CD4-positive, alpha-beta memory T cell (primary cell): ENCODE measurements at regions of chr7 and their contacts with region 1.

Region 1: DNA sequence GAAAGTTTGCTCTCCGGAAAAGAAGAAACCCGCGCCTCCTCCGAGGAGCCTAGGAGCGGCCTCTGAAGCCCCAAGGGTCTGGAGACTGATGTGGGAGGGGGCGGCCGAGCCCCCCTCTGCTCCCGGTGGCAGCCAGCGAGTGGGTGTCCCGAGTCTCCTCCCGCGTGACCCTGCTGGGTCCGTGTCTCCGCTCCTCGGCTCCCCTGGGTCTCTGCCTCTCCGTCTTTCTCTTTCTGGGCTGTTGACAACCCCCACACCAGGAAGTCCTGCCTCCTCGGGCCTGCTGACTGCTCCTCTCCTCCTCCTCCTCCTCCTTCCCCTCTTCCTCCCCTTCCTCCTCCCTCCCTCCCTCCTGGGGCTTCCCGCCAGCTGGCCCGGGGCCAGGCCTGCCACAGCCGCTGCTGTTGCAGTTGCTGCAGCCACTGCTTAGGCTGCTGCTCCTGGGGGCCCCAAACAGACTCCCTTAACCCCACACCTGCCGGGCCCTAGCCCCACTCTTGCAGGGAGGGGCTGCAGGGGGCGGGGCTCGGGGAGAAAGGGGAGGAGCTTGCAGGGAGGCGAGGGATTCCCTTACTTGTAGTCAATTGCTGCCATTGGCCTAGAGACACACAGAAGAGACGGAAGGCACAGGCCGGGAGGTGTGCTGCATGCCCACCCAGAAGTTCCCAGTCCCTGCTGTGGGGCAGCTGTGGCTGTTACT is at the start of gene TSC22D4:
- DNase-seq: peak; percentile 93 to 97 (median 95)
- H3K4me3 ChIP-seq: peak within 1 kb of the TSS; percentile 81 to 95
- H3K4me3 Mint-ChIP-seq: peak within 1 kb of the TSS; percentile 82 to 99 (median 98)
- H3K27ac ChIP-seq: peak within 1 kb of the TSS; percentile 75
- H3K27ac Mint-ChIP-seq: peak within 1 kb of the TSS; percentile 75 to 99 (median 94)
- H3K4me1 ChIP-seq: peaks cover 58% of the 10 kb centered on the region
- H3K4me1 Mint-ChIP-seq: peaks cover 28 to 57% (median 38%) of the 10 kb centered on the region in 4 donors
- H3K27me3 ChIP-seq: no peaks in the 10 kb centered on the region
- H3K27me3 Mint-ChIP-seq: no peaks in the 10 kb centered on the region
- total RNA-seq, gene TSC22D4: 144 to 154 TPM

Region 2: DNA sequence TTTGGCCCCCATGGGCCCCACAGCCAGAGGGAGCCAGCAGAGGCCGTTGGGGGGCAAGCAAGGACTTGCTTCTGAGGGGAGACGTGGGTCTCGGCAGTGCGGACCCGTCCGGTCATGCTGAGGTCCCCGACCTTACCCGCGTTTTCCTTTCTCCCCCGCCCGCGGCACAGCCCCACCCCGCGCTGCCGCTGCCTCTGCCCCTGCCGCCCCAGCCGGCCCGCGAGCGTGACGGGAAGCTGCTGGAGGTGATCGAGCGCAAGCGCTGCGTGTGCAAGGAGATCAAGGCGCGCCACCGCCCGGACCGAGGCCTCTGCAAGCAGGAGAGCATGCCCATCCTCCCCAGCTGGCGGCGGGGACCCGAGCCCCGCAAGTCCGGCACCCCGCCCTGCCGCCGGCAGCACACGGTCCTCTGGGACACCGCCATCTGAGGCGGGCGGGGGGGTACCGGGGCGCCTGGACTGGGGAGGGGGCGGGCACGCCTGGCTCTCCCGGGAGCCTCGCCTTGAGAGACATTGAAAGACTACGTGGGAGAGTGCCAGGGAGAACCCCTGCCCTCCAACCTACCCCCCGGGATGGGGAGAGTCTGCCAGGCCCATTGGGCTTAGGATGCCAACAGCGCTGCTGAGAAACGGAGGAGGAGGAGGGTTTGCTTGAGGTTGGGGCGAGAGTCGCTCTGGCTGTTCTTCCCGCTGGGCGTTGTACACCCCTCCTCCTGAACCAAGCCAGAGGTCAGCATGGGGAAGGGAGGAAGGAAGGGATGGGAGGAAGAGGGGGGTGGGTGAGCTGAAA is 14.6 kb after region 1 on chr7:
- CTCF ChIA-PET with region 1: interaction called, 13 read pairs
- POLR2A ChIA-PET with region 1: interaction called, 12 read pairs
- intact Hi-C with region 1: loop called (anchors 1 kb)
- DNase-seq: peak; percentile 48 to 60 (median 54)
- H3K4me3 ChIP-seq: no peak overlapping the region
- H3K4me3 Mint-ChIP-seq: peak overlapping the region; percentile 71 to 84 (median 75)
- H3K27ac ChIP-seq: no peak overlapping the region
- H3K27ac Mint-ChIP-seq: peak overlapping the region in 3 of 7 donors; percentile 32 to 86 (median 84)
- H3K4me1 ChIP-seq: peaks cover 10% of the 10 kb centered on the region
- H3K4me1 Mint-ChIP-seq: peaks cover 3 to 29% (median 15%) of the 10 kb centered on the region in 4 donors
- H3K27me3 ChIP-seq: no peaks in the 10 kb centered on the region
- H3K27me3 Mint-ChIP-seq: peaks cover 0 to 2% of the 10 kb centered on the region in 2 donors

Region 3: GRCh38 chr7:100538654-100539435 is 59.7 kb after region 1 on chr7 and contains the start of gene AGFG2:
- CTCF ChIA-PET with region 1: interaction called, 19 read pairs
- POLR2A ChIA-PET with region 1: interaction called, 121 read pairs
- intact Hi-C with region 1: loop called (anchors 1 kb)
- DNase-seq: peak; percentile 100
- H3K4me3 ChIP-seq: peak within 1 kb of the TSS; percentile 33 to 79
- H3K4me3 Mint-ChIP-seq: peak within 1 kb of the TSS; percentile 88 to 99 (median 97)
- H3K27ac ChIP-seq: peak within 1 kb of the TSS; percentile 49
- H3K27ac Mint-ChIP-seq: peak within 1 kb of the TSS; percentile 84 to 95 (median 91)
- H3K4me1 ChIP-seq: peaks cover 42% of the 10 kb centered on the region
- H3K4me1 Mint-ChIP-seq: peaks cover 33 to 49% (median 41%) of the 10 kb centered on the region in 4 donors
- H3K27me3 ChIP-seq: no peaks in the 10 kb centered on the region
- H3K27me3 Mint-ChIP-seq: no peaks in the 10 kb centered on the region
- total RNA-seq, gene AGFG2: 56.6 to 58.3 TPM

Region 4: GRCh38 chr7:100563809-100564400 is 84.8 kb after region 1 on chr7:
- CTCF ChIA-PET with region 1: interaction called, 44 read pairs
- POLR2A ChIA-PET with region 1: interaction called, 20 read pairs
- intact Hi-C with region 1: loop called (anchors 1 kb)
- DNase-seq: peak; percentile 74 to 80 (median 77)
- H3K4me3 ChIP-seq: no peak overlapping the region
- H3K4me3 Mint-ChIP-seq: no peak overlapping the region
- H3K27ac ChIP-seq: peak overlapping the region; percentile 32
- H3K27ac Mint-ChIP-seq: peak overlapping the region; percentile 39 to 84 (median 59)
- H3K4me1 ChIP-seq: peaks cover 29% of the 10 kb centered on the region
- H3K4me1 Mint-ChIP-seq: peaks cover 16 to 40% (median 29%) of the 10 kb centered on the region in 4 donors
- H3K27me3 ChIP-seq: no peaks in the 10 kb centered on the region
- H3K27me3 Mint-ChIP-seq: no peaks in the 10 kb centered on the region

Region 5: GRCh38 chr7:100598425-100598824 is 119.3 kb after region 1 on chr7:
- CTCF ChIA-PET with region 1: no interaction called
- POLR2A ChIA-PET with region 1: no interaction called
- intact Hi-C with region 1: no loop called
- DNase-seq: no peak
- H3K4me3 ChIP-seq: no peak overlapping the region
- H3K4me3 Mint-ChIP-seq: no peak overlapping the region
- H3K27ac ChIP-seq: no peak overlapping the region
- H3K27ac Mint-ChIP-seq: peak overlapping the region in 3 of 7 donors; percentile 8 to 82 (median 29)
- H3K4me1 ChIP-seq: peaks cover 3% of the 10 kb centered on the region
- H3K4me1 Mint-ChIP-seq: peaks cover 1 to 11% (median 2%) of the 10 kb centered on the region in 4 donors
- H3K27me3 ChIP-seq: no peaks in the 10 kb centered on the region
- H3K27me3 Mint-ChIP-seq: no peaks in the 10 kb centered on the region